Posterior cingulate gyrus (tissue), 11 donors: ENCODE measurements at regions of chr11 and their contacts with region 1.

Region 1: GRCh38 chr11:111230122-111230465 is 15.4 kb upstream of the POU2AF2 start:
- DNase-seq: no peak

Region 2: GRCh38 chr11:110447897-110448745 is 782.0 kb before region 1 on chr11:
- intact Hi-C with region 1: loop called (anchors 5 kb)
- DNase-seq: no peak

Region 3: GRCh38 chr11:110712659-110713448 is 517.2 kb before region 1 on chr11:
- intact Hi-C with region 1: loop called (anchors 1 kb)
- DNase-seq: peak; percentile 21 to 91 (median 44)

Region 4: GRCh38 chr11:111010391-111011354 is 219.4 kb before region 1 on chr11:
- intact Hi-C with region 1: no loop called
- DNase-seq: no peak

Region 5: GRCh38 chr11:111878849-111879636 is 648.9 kb after region 1 on chr11 and contains the starts of genes CFAP68 and FDXACB1:
- intact Hi-C with region 1: no loop called
- DNase-seq: peak; percentile 94 to 99 (median 97)